ENCODE measurements at regions of chr5 and their contacts with region 1.

Region 1: DNA sequence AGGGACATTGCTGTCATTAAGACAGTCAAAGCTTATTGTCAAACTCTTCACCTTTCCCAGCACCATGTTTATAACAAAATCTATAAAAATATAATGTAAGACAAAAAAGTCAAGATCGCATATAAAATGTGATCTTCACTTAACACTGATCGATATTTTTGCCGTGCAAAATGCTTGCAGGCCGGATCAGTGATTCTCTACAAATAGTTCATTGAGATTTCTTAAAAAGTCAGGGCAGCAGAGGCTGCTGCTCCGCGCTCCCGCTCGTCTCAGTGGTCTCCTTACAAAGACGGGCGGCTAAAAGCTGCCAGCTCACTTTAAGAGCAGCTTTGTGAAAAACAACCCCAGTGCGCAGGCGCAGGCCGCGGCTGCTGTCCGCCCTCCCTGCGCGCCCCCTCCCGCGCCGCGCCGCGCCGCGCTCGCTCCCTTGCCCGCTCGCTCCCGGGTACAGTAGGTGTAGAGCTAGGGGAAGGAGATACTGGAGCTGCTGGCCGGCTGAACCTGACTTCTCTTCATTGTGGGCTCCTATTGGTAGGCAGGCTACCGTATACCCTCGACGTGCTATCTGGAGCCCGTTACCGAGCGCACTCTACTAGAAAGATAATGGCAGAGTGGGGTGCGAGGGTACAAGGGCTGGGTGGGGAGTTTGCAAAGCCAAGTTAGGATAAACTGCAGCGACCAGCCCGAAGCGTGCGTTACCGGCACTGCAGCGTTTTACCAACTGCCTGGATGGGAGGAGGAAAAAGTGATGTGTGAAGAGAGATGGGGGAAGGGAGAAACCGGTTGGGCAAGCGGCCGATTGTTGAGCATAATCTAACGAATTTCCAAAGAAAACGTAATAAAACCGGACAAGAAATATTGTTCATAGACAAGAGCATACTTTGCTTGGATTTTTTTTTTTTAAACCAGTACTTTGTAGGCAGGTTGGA is at the start of gene ARRDC3:
- DNase-seq: peak; percentile 95 to 97 (median 96)
- H3K4me3 ChIP-seq: peak within 1 kb of the TSS; percentile 81 to 100
- H3K4me3 Mint-ChIP-seq: peak within 1 kb of the TSS; percentile 94 to 100 (median 99)
- H3K27ac ChIP-seq: peak within 1 kb of the TSS; percentile 100
- H3K27ac Mint-ChIP-seq: peak within 1 kb of the TSS; percentile 91 to 100 (median 99)
- H3K4me1 ChIP-seq: peaks cover 21% of the 10 kb centered on the region
- H3K4me1 Mint-ChIP-seq: peaks cover 22 to 34% (median 25%) of the 10 kb centered on the region in 4 donors
- H3K27me3 ChIP-seq: no peaks in the 10 kb centered on the region
- H3K27me3 Mint-ChIP-seq: no peaks in the 10 kb centered on the region
- total RNA-seq, gene ARRDC3: 123 to 130 TPM

Region 2: GRCh38 chr5:90409318-90410177 is 973.7 kb before region 1 on chr5 and contains the start of gene CETN3:
- CTCF ChIA-PET with region 1: no interaction called
- POLR2A ChIA-PET with region 1: interaction called, 34 read pairs
- intact Hi-C with region 1: no loop called
- DNase-seq: peak; percentile 89 to 91 (median 91)
- H3K4me3 ChIP-seq: peak within 1 kb of the TSS; percentile 90 to 99
- H3K4me3 Mint-ChIP-seq: no peak within 1 kb of the TSS
- H3K27ac ChIP-seq: peak within 1 kb of the TSS; percentile 89
- H3K27ac Mint-ChIP-seq: no peak within 1 kb of the TSS
- H3K4me1 ChIP-seq: peaks cover 20% of the 10 kb centered on the region
- H3K4me1 Mint-ChIP-seq: peaks cover 11 to 17% (median 12%) of the 10 kb centered on the region in 4 donors
- H3K27me3 ChIP-seq: no peaks in the 10 kb centered on the region
- H3K27me3 Mint-ChIP-seq: no peaks in the 10 kb centered on the region
- total RNA-seq, gene CETN3: 15.9 to 22.1 TPM

Region 3: DNA sequence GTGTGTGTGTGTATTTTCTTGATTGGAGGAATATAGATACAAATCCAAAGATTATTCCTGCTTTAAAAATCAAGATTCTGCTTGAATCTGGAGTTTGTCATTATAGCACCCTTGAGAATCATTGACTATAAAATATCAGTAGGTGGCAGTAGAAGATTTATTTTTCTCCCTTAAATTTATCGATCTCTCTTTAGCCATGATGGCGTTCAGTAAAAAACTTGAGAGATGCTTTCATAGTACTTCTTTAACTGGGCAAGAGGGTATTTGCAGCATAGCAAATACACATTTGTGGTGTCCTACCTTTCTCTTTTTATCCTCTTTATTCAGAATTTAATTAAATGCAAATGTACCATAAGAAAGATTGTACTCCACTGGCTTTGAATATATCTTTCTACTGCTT is 517.0 kb before region 1 on chr5:
- CTCF ChIA-PET with region 1: interaction called, 42 read pairs
- POLR2A ChIA-PET with region 1: no interaction called
- intact Hi-C with region 1: loop called (anchors 10 kb)
- DNase-seq: peak in 4 of 5 donors; percentile 19 to 30 (median 21)
- H3K4me3 ChIP-seq: no peak overlapping the region
- H3K4me3 Mint-ChIP-seq: no peak overlapping the region
- H3K27ac ChIP-seq: no peak overlapping the region
- H3K27ac Mint-ChIP-seq: no peak overlapping the region
- H3K4me1 ChIP-seq: no peaks in the 10 kb centered on the region
- H3K4me1 Mint-ChIP-seq: no peaks in the 10 kb centered on the region
- H3K27me3 ChIP-seq: no peaks in the 10 kb centered on the region
- H3K27me3 Mint-ChIP-seq: peaks cover 10 to 13% of the 10 kb centered on the region in 2 donors

Region 4: GRCh38 chr5:91219803-91220371 is 163.4 kb before region 1 on chr5:
- CTCF ChIA-PET with region 1: interaction called, 280 read pairs
- POLR2A ChIA-PET with region 1: interaction called, 31 read pairs
- intact Hi-C with region 1: no loop called
- DNase-seq: peak in 3 of 5 donors; percentile 8 to 16 (median 15)
- H3K4me3 ChIP-seq: no peak overlapping the region
- H3K4me3 Mint-ChIP-seq: no peak overlapping the region
- H3K27ac ChIP-seq: no peak overlapping the region
- H3K27ac Mint-ChIP-seq: no peak overlapping the region
- H3K4me1 ChIP-seq: no peaks in the 10 kb centered on the region
- H3K4me1 Mint-ChIP-seq: no peaks in the 10 kb centered on the region
- H3K27me3 ChIP-seq: no peaks in the 10 kb centered on the region
- H3K27me3 Mint-ChIP-seq: peaks cover 2 to 10% of the 10 kb centered on the region in 2 donors

Region 5: GRCh38 chr5:91245871-91246270 is 137.4 kb before region 1 on chr5:
- CTCF ChIA-PET with region 1: interaction called, 61 read pairs
- POLR2A ChIA-PET with region 1: interaction called, 15 read pairs
- intact Hi-C with region 1: no loop called
- DNase-seq: no peak
- H3K4me3 ChIP-seq: no peak overlapping the region
- H3K4me3 Mint-ChIP-seq: no peak overlapping the region
- H3K27ac ChIP-seq: no peak overlapping the region
- H3K27ac Mint-ChIP-seq: no peak overlapping the region
- H3K4me1 ChIP-seq: no peaks in the 10 kb centered on the region
- H3K4me1 Mint-ChIP-seq: peaks cover 0 to 5% (median 0%) of the 10 kb centered on the region in 4 donors
- H3K27me3 ChIP-seq: no peaks in the 10 kb centered on the region
- H3K27me3 Mint-ChIP-seq: peaks cover 0 to 1% of the 10 kb centered on the region in 2 donors

Region 6: DNA sequence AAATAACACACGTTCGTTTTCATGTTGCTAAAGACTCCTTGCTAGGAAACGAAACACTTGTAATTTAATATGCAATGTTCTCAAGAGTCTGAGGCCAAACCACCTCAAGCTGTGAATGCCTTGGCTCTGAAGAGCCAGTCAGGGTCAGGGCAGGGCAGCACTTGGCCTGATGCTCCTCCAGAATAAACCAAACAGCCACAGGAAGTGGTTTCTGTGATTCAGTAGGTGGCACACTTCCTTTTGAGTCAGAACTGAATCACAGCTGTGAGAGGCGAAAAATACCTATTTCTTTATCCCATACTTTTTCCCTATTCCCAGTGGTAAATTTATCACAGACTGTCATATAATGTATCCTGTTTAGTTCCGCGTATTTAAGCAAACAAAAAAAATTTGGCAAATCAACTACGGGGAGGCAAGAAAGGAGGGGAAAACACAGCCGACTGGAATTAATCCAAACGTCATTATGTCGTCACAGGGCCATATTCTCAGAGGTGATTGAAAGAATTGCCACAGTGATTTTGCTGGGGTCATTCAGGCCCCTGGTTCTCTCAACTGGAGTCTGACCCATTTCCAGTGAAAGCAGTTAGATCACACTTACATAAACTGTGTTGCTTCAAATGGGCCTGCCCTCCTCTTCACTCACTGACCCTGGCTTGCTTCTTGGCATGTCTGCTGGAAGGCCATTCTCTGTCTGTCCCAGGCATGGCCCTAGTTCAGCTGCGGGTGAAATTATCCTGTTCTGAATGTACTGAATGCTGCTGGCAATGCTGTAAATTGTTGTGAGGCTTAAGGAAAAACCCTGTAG is 71.4 kb before region 1 on chr5:
- CTCF ChIA-PET with region 1: interaction called, 60 read pairs
- POLR2A ChIA-PET with region 1: interaction called, 230 read pairs
- intact Hi-C with region 1: loop called (anchors 1 kb)
- DNase-seq: peak; percentile 75 to 87 (median 81)
- H3K4me3 ChIP-seq: peak overlapping the region in 1 of 2 donors; percentile 25
- H3K4me3 Mint-ChIP-seq: peak overlapping the region; percentile 55 to 87 (median 74)
- H3K27ac ChIP-seq: peak overlapping the region; percentile 43
- H3K27ac Mint-ChIP-seq: peak overlapping the region; percentile 94 to 98 (median 97)
- H3K4me1 ChIP-seq: peaks cover 46% of the 10 kb centered on the region
- H3K4me1 Mint-ChIP-seq: peaks cover 35 to 53% (median 36%) of the 10 kb centered on the region in 4 donors
- H3K27me3 ChIP-seq: no peaks in the 10 kb centered on the region
- H3K27me3 Mint-ChIP-seq: peaks cover 0 to 2% of the 10 kb centered on the region in 2 donors

Region 7: DNA sequence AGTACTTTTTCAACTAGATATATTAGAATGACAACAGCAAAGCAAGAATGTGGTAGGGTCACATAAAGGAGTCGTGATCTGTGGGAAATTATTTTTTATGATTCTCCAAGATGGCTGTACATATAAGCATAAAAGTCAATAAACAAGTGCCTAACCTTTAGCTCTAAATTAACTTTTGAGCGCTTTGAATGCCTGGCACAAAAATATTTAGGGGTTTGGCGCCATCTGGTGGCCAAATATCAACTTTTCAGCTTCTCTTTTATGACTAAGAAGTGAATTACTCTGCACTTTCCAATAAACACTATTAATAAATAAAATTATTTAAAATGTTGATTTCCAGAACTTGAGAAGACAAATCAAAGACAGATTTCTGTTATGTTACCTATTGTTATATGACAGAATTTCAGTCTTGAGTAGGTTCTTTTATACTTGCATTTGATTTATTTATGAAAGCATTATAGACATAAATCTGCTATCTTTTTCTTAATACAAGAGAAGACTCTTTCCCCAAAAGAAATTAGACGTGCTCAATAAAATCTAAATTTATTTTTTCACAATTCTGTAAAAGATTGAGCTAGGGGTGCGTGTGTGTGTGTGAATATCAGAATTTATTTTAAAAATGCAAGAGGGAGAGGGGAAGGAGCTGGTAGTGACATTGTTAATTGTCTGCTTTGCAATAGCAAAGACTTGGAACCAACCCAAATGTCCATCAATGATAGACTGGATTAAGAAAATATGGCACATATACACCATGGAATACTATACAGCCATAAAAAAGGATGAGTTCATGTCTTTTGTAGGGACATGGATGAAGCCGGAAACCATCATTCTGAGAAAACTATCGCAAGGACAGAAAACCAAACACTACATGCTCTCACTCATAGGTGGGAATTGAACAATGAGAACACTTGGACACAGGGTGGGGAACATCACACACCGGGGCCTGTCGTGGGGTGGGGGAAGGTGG is 36.6 kb after region 1 on chr5:
- CTCF ChIA-PET with region 1: interaction called, 92 read pairs
- POLR2A ChIA-PET with region 1: interaction called, 7 read pairs
- intact Hi-C with region 1: no loop called
- DNase-seq: peak; percentile 57 to 68 (median 62)
- H3K4me3 ChIP-seq: no peak overlapping the region
- H3K4me3 Mint-ChIP-seq: no peak overlapping the region
- H3K27ac ChIP-seq: no peak overlapping the region
- H3K27ac Mint-ChIP-seq: no peak overlapping the region
- H3K4me1 ChIP-seq: no peaks in the 10 kb centered on the region
- H3K4me1 Mint-ChIP-seq: peaks cover 0 to 6% (median 1%) of the 10 kb centered on the region in 4 donors
- H3K27me3 ChIP-seq: no peaks in the 10 kb centered on the region
- H3K27me3 Mint-ChIP-seq: no peaks in the 10 kb centered on the region

Region 8: GRCh38 chr5:91464886-91465646 is 81.8 kb after region 1 on chr5:
- CTCF ChIA-PET with region 1: no interaction called
- POLR2A ChIA-PET with region 1: no interaction called
- intact Hi-C with region 1: no loop called
- DNase-seq: no peak
- H3K4me3 ChIP-seq: no peak overlapping the region
- H3K4me3 Mint-ChIP-seq: no peak overlapping the region
- H3K27ac ChIP-seq: no peak overlapping the region
- H3K27ac Mint-ChIP-seq: no peak overlapping the region
- H3K4me1 ChIP-seq: no peaks in the 10 kb centered on the region
- H3K4me1 Mint-ChIP-seq: peaks cover 0 to 5% (median 4%) of the 10 kb centered on the region in 4 donors
- H3K27me3 ChIP-seq: no peaks in the 10 kb centered on the region
- H3K27me3 Mint-ChIP-seq: peaks cover 0 to 1% of the 10 kb centered on the region in 2 donors

Measured in CD4-positive, alpha-beta memory T cell (primary cell).